ENCODE measurements at regions of chr6 and their contacts with region 1.

Region 1: GRCh38 chr6:31399589-31400466 is 3.6 kb upstream of the MICA start:
- DNase-seq: peak; percentile 91 to 94 (median 92)
- H3K4me3 ChIP-seq: peak overlapping the region; percentile 81
- H3K27ac ChIP-seq: peak overlapping the region; percentile 97 to 98
- H3K4me1 ChIP-seq: peaks cover 15% of the 10 kb centered on the region
- H3K27me3 ChIP-seq: no peaks in the 10 kb centered on the region
- CTCF ChIP-seq: peak; percentile 88 to 95 (median 92)
- EP300 ChIP-seq: no peak
- POLR2A ChIP-seq: peak; percentile 54

Region 2: DNA sequence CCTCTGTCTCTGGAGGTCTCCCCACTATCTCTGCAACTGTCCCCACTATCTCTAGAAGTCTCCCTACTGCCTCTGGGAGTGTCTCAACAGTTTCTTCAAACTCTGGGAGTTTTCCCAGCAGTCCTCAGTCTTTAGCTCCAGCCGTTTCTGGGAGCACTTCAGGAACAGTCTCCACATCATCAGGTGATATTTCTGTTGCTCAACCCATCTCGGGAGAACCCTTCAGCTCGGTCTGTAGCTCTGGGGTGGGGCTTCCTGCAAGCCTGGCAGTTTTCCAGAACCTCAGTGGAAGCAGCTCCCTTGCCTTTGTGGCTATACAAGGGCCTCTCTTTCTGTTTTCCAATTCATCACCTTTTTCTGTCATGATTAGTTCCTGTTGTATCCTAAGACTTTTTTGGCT is 464.8 kb before region 1 on chr6:
- intact Hi-C with region 1: no loop called
- DNase-seq: no peak
- H3K4me3 ChIP-seq: no peak overlapping the region
- H3K27ac ChIP-seq: no peak overlapping the region
- H3K4me1 ChIP-seq: no peaks in the 10 kb centered on the region
- H3K27me3 ChIP-seq: no peaks in the 10 kb centered on the region
- CTCF ChIP-seq: no peak
- EP300 ChIP-seq: no peak
- POLR2A ChIP-seq: no peak

Region 3: GRCh38 chr6:31441365-31442267 is 41.8 kb after region 1 on chr6:
- intact Hi-C with region 1: loop called (anchors 1 to 5 kb)
- DNase-seq: peak; percentile 74 to 88 (median 85)
- H3K4me3 ChIP-seq: no peak overlapping the region
- H3K27ac ChIP-seq: no peak overlapping the region
- H3K4me1 ChIP-seq: no peaks in the 10 kb centered on the region
- H3K27me3 ChIP-seq: no peaks in the 10 kb centered on the region
- CTCF ChIP-seq: peak; percentile 51 to 75 (median 71)
- EP300 ChIP-seq: no peak
- POLR2A ChIP-seq: no peak